Heart right ventricle (tissue), 16 donors: ENCODE measurements at regions of chr2 and their contacts with region 1.

Region 1: GRCh38 chr2:19033240-19033639 is 325.2 kb downstream of the OSR1 start:
- DNase-seq: peak in 1 of 2 donors; percentile 39
- ATAC-seq: peak in 7 of 8 donors; percentile 68 to 95 (median 87)
- H3K4me3 ChIP-seq: no peak overlapping the region
- H3K27ac ChIP-seq: peak overlapping the region in 3 of 10 donors; percentile 17 to 50 (median 33)
- H3K4me1 ChIP-seq: peaks cover 0 to 33% (median 15%) of the 10 kb centered on the region in 9 donors
- H3K27me3 ChIP-seq: no peaks in the 10 kb centered on the region
- CTCF ChIP-seq: no peak

Region 2: DNA sequence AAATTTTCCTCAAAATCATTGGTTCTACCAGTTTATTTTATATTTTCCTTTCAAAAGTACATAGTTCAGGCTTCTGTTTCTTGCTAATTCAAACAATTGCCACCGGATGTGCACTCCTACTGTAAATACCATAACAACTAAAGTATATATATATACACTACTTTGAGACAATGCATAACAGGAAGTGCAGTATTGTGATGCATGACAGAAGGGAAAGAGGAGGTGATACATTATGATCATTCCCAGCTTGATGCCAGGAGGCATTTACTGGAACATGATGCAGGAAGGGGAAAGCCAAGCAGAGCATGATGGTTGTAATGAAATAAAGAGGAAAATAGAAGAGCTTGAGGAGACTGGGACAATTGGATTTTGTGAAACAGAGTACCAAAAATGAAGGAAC is 228.7 kb before region 1 on chr2:
- intact Hi-C with region 1: no loop called
- DNase-seq: no peak
- ATAC-seq: no peak
- H3K4me3 ChIP-seq: no peak overlapping the region
- H3K27ac ChIP-seq: no peak overlapping the region
- H3K4me1 ChIP-seq: no peaks in the 10 kb centered on the region
- H3K27me3 ChIP-seq: no peaks in the 10 kb centered on the region
- CTCF ChIP-seq: no peak

Region 3: GRCh38 chr2:18987592-18988073 is 45.6 kb before region 1 on chr2:
- intact Hi-C with region 1: loop called in 1 of 10 experiments (anchors 5 kb)
- DNase-seq: peak; percentile 29 to 81
- ATAC-seq: peak in 5 of 8 donors; percentile 58 to 68 (median 66)
- H3K4me3 ChIP-seq: no peak overlapping the region
- H3K27ac ChIP-seq: no peak overlapping the region
- H3K4me1 ChIP-seq: peaks cover 0 to 31% (median 17%) of the 10 kb centered on the region in 9 donors
- H3K27me3 ChIP-seq: no peaks in the 10 kb centered on the region
- CTCF ChIP-seq: peak in 8 of 9 donors; percentile 7 to 59 (median 34)